Mammary epithelial cell (primary cell): ENCODE measurements at regions of chr2 and their contacts with region 1.

Region 1: GRCh38 chr2:34031097-34031496 is 432.0 kb upstream of the FAM98A start:
- DNase-seq: no peak
- H3K4me3 ChIP-seq: no peak overlapping the region
- H3K27ac ChIP-seq: no peak overlapping the region
- H3K4me1 ChIP-seq: no peaks in the 10 kb centered on the region
- H3K27me3 ChIP-seq: no peaks in the 10 kb centered on the region
- CTCF ChIP-seq: no peak

Region 2: GRCh38 chr2:33877348-33878016 is 153.6 kb before region 1 on chr2:
- CTCF ChIA-PET with region 1: no interaction called
- dilution Hi-C with region 1: no loop called
- in situ Hi-C with region 1: no loop called
- intact Hi-C with region 1: no loop called
- DNase-seq: no peak
- H3K4me3 ChIP-seq: no peak overlapping the region
- H3K27ac ChIP-seq: no peak overlapping the region
- H3K4me1 ChIP-seq: no peaks in the 10 kb centered on the region
- H3K27me3 ChIP-seq: no peaks in the 10 kb centered on the region
- CTCF ChIP-seq: no peak

Region 3: GRCh38 chr2:34241905-34242762 is 211.0 kb after region 1 on chr2:
- CTCF ChIA-PET with region 1: no interaction called
- dilution Hi-C with region 1: loop called (anchors 10 kb)
- in situ Hi-C with region 1: no loop called
- intact Hi-C with region 1: no loop called
- DNase-seq: no peak
- H3K4me3 ChIP-seq: no peak overlapping the region
- H3K27ac ChIP-seq: no peak overlapping the region
- H3K4me1 ChIP-seq: no peaks in the 10 kb centered on the region
- H3K27me3 ChIP-seq: no peaks in the 10 kb centered on the region
- CTCF ChIP-seq: no peak